ENCODE measurements at regions of chr6 and their contacts with region 1.

Region 1: DNA sequence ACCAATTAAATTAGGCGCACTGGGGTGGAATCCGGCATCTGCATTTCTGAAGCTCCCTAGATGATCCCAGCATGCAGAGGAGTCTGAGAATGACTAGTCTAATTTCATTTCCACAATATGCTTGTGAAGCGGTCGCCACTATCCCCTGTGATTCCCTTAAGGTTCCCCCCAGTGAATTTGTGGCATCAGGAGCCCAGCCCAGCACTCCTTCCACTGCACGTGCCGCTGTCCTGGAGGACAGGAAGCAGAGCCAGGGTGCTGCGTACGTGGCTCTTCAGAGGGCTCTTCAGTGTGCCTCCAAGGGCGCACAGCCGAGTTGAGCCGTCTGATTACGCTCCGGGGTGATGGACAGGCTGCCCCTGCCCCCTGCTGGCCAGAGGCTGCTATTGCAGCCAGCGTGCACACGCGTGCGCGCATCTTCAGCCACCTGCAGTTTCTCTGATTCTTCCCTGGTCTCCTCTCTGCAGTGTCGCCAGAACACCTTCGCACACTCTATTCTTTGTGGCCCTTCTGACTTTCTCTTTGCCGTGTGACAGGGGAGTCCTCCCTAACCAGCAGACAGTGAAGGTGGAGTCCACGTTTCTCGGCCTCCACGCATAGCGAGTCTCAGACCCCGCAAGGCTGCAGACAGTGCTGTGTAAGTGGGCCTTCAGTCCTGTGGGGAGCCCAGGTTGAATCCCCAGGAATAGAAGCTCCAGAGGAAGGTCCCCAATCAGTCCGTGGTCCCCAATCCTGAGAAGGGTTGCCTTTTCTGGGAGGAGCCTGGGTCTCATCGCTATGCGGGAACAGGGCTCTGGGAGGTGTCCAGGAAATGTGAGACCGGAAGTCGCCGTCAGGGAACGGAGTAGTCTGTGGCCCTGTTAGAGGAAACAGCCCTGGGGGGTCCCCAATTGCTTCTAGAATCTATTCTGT is 16.5 kb upstream of the NCR2 start:
- DNase-seq: peak; percentile 78 to 92
- ATAC-seq: peak; percentile 99 to 100 (median 100)
- H3K4me3 ChIP-seq: no peak overlapping the region
- H3K4me3 Mint-ChIP-seq: no peak overlapping the region
- H3K27ac ChIP-seq: no peak overlapping the region
- H3K27ac Mint-ChIP-seq: no peak overlapping the region
- H3K4me1 ChIP-seq: peaks cover 12% of the 10 kb centered on the region
- H3K4me1 Mint-ChIP-seq: peaks cover 8 to 12% of the 10 kb centered on the region in 2 donors
- H3K27me3 ChIP-seq: no peaks in the 10 kb centered on the region
- H3K27me3 Mint-ChIP-seq: peaks cover 23 to 35% of the 10 kb centered on the region in 2 donors
- CTCF ChIP-seq: peak; percentile 99

Region 2: DNA sequence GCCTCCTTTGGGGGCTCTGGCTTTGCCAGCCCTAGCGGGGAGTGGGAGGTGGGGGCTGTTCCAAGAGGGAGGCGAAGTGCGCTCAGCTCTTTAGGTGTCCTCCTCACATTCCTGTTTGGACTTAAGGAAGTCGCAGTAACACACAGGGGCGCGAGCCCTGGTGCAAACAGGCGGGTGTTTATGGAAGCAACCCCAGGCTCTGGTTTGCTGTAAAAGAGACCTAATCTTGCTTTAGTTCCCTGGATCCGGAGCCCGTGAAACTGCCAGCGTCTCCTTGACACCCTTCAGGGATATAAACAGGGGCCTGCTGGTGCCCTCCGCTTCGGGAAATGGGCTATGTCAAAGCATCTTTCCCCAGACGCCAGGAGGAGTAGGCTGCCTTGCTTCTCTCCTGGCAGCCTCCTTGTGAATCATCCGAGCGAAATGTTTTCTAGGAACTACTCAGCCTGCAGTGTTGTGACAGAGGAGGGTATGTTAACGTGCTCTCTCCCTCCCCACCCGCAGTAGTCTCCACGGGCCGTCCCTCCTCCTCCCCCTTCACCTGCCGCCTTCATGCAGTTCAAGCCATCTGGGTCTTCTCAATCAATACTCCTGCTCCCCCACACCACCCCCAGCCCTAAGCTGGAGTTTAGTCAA is 563.7 kb before region 1 on chr6:
- intact Hi-C with region 1: no loop called
- DNase-seq: no peak
- ATAC-seq: no peak
- H3K4me3 ChIP-seq: no peak overlapping the region
- H3K4me3 Mint-ChIP-seq: no peak overlapping the region
- H3K27ac ChIP-seq: no peak overlapping the region
- H3K27ac Mint-ChIP-seq: no peak overlapping the region
- H3K4me1 ChIP-seq: no peaks in the 10 kb centered on the region
- H3K4me1 Mint-ChIP-seq: no peaks in the 10 kb centered on the region
- H3K27me3 ChIP-seq: peaks cover 9% of the 10 kb centered on the region
- H3K27me3 Mint-ChIP-seq: peaks cover 41 to 57% of the 10 kb centered on the region in 2 donors
- CTCF ChIP-seq: no peak

Region 3: GRCh38 chr6:41002216-41002615 is 316.7 kb before region 1 on chr6:
- intact Hi-C with region 1: loop called (anchors 1 kb)
- DNase-seq: no peak
- ATAC-seq: no peak
- H3K4me3 ChIP-seq: no peak overlapping the region
- H3K4me3 Mint-ChIP-seq: no peak overlapping the region
- H3K27ac ChIP-seq: no peak overlapping the region
- H3K27ac Mint-ChIP-seq: no peak overlapping the region
- H3K4me1 ChIP-seq: no peaks in the 10 kb centered on the region
- H3K4me1 Mint-ChIP-seq: no peaks in the 10 kb centered on the region
- H3K27me3 ChIP-seq: no peaks in the 10 kb centered on the region
- H3K27me3 Mint-ChIP-seq: peaks cover 24 to 77% of the 10 kb centered on the region in 2 donors
- CTCF ChIP-seq: no peak

Region 4: GRCh38 chr6:41092421-41093140 is 226.3 kb before region 1 on chr6:
- intact Hi-C with region 1: loop called (anchors 1 kb)
- DNase-seq: peak in 1 of 2 donors; percentile 29
- ATAC-seq: peak in 1 of 3 donors; percentile 45
- H3K4me3 ChIP-seq: no peak overlapping the region
- H3K4me3 Mint-ChIP-seq: no peak overlapping the region
- H3K27ac ChIP-seq: no peak overlapping the region
- H3K27ac Mint-ChIP-seq: no peak overlapping the region
- H3K4me1 ChIP-seq: no peaks in the 10 kb centered on the region
- H3K4me1 Mint-ChIP-seq: no peaks in the 10 kb centered on the region
- H3K27me3 ChIP-seq: no peaks in the 10 kb centered on the region
- H3K27me3 Mint-ChIP-seq: no peaks in the 10 kb centered on the region
- CTCF ChIP-seq: peak; percentile 27

Region 5: GRCh38 chr6:41191569-41191968 is 127.3 kb before region 1 on chr6:
- intact Hi-C with region 1: loop called (anchors 1 kb)
- DNase-seq: peak; percentile 40 to 60
- ATAC-seq: peak; percentile 65 to 84 (median 79)
- H3K4me3 ChIP-seq: no peak overlapping the region
- H3K4me3 Mint-ChIP-seq: no peak overlapping the region
- H3K27ac ChIP-seq: no peak overlapping the region
- H3K27ac Mint-ChIP-seq: no peak overlapping the region
- H3K4me1 ChIP-seq: peaks cover 17% of the 10 kb centered on the region
- H3K4me1 Mint-ChIP-seq: peaks cover 24 to 36% of the 10 kb centered on the region in 2 donors
- H3K27me3 ChIP-seq: no peaks in the 10 kb centered on the region
- H3K27me3 Mint-ChIP-seq: no peaks in the 10 kb centered on the region
- CTCF ChIP-seq: peak; percentile 40

Region 6: DNA sequence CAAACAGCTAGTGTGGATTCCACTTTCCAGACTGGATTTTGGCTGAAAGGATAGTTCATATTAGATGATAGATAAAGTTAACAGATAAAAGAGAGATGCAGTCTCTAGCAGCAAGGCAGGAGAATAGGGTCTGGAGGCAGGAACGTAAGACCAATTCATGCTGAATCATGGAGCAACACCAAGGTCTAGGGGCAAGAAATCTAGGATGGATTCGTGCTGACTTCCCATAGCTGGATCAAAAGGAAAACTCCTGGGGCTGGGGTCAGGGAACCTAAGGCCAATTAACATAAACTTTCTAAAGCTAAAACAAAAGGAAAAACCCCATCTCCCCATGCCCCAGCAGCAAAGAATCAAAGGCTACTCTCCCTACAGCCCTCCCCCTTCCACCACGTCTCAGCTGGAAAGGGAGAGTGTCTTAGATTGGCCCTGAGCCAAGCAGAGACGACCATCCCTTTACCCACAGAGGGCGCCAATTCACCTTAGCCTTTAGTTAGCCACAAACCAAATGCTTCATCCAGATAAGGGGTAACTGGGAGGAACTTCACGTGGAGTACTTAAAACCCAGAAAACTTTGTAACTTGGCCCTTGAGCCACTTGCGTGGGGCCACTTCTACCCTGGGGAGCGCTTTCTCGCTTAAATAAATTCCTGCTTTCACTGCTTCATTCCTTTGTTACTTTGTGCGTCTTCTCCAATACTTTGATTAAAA is 40.1 kb before region 1 on chr6:
- intact Hi-C with region 1: loop called (anchors 2 kb)
- DNase-seq: peak; percentile 33 to 85
- ATAC-seq: peak; percentile 74 to 91 (median 76)
- H3K4me3 ChIP-seq: no peak overlapping the region
- H3K4me3 Mint-ChIP-seq: no peak overlapping the region
- H3K27ac ChIP-seq: no peak overlapping the region
- H3K27ac Mint-ChIP-seq: peak overlapping the region in 1 of 2 donors; percentile 58
- H3K4me1 ChIP-seq: peaks cover 13% of the 10 kb centered on the region
- H3K4me1 Mint-ChIP-seq: peaks cover 6 to 11% of the 10 kb centered on the region in 2 donors
- H3K27me3 ChIP-seq: no peaks in the 10 kb centered on the region
- H3K27me3 Mint-ChIP-seq: peaks cover 0 to 4% of the 10 kb centered on the region in 2 donors
- CTCF ChIP-seq: peak; percentile 37

Region 7: DNA sequence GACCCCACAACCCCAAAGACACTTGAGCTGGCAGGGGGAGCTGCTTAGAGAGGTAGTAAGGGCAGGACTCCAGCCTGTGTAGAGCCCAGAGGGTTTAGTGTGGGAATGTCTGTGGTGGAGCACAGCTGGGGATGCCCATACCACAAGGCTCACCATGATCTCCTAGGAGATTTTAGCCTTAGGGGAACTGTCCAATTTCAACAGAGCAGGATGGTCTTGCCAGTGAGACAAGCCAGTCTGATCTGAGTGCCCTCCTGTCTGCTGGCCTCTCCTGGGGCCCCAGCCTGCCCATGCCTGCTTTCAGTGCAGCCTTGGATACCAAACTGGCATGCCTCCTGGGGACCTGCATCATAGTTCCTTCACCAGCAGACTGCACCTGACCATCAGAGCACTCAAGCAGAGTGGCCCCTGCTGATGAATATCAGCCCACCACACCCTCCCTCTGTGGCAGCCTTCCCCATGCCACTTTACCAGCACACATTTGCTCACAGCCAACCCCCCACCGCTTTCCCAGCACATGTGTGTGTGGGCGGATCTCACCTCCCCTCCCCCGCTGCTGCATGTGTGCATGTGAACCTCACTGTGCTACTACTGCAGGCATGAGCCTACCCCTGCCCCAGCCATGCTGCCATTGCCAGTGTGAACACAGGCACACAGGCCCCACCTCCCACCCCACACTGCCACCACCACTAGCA is 24.6 kb before region 1 on chr6:
- intact Hi-C with region 1: no loop called
- DNase-seq: no peak
- ATAC-seq: no peak
- H3K4me3 ChIP-seq: no peak overlapping the region
- H3K4me3 Mint-ChIP-seq: no peak overlapping the region
- H3K27ac ChIP-seq: no peak overlapping the region
- H3K27ac Mint-ChIP-seq: no peak overlapping the region
- H3K4me1 ChIP-seq: no peaks in the 10 kb centered on the region
- H3K4me1 Mint-ChIP-seq: peaks cover 15 to 20% of the 10 kb centered on the region in 2 donors
- H3K27me3 ChIP-seq: no peaks in the 10 kb centered on the region
- H3K27me3 Mint-ChIP-seq: no peaks in the 10 kb centered on the region
- CTCF ChIP-seq: no peak

Region 8: GRCh38 chr6:41442800-41443501 is 124.0 kb after region 1 on chr6:
- intact Hi-C with region 1: no loop called
- DNase-seq: peak in 1 of 2 donors; percentile 55
- ATAC-seq: peak in 1 of 3 donors; percentile 23
- H3K4me3 ChIP-seq: no peak overlapping the region
- H3K4me3 Mint-ChIP-seq: peak overlapping the region; percentile 13
- H3K27ac ChIP-seq: peak overlapping the region; percentile 51
- H3K27ac Mint-ChIP-seq: no peak overlapping the region
- H3K4me1 ChIP-seq: peaks cover 53% of the 10 kb centered on the region
- H3K4me1 Mint-ChIP-seq: peaks cover 33 to 39% of the 10 kb centered on the region in 2 donors
- H3K27me3 ChIP-seq: peaks cover 34% of the 10 kb centered on the region
- H3K27me3 Mint-ChIP-seq: peaks cover 72 to 78% of the 10 kb centered on the region in 2 donors
- CTCF ChIP-seq: peak; percentile 39

Region 9: DNA sequence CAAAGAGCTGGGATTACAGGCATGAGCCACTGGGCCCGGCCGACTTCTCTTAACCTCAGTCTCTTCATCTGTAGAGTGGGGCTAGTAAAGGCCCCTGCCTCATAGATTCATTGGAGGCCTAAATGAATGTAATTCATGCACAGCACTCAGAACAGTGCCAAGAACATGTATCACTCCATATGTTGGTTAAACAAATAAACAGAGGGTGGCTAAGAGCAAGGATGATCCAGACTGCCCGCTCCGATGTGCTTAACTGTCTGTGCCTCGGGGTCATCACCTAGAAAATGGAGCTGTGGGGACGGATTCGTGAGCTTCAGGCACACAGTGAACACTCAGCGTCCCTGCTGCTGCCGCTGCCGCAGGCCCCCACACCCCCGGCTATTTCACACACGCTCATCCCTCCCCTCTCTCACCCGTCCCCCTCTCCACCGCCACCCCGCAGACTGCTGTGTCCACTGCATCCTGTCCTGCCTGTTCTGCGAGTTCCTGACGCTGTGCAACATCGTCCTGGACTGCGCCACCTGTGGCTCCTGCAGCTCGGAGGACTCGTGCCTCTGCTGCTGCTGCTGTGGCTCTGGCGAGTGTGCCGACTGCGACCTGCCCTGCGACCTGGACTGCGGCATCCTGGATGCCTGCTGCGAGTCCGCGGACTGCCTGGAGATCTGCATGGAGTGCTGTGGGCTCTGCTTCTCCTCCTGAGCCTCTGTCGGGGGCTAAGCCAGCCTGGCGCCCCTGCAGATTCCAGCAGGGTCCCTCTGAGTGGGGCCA is 334.2 kb after region 1 on chr6:
- intact Hi-C with region 1: no loop called
- DNase-seq: no peak
- ATAC-seq: no peak
- H3K4me3 ChIP-seq: no peak overlapping the region
- H3K4me3 Mint-ChIP-seq: no peak overlapping the region
- H3K27ac ChIP-seq: no peak overlapping the region
- H3K27ac Mint-ChIP-seq: no peak overlapping the region
- H3K4me1 ChIP-seq: no peaks in the 10 kb centered on the region
- H3K4me1 Mint-ChIP-seq: no peaks in the 10 kb centered on the region
- H3K27me3 ChIP-seq: no peaks in the 10 kb centered on the region
- H3K27me3 Mint-ChIP-seq: peaks cover 6 to 20% of the 10 kb centered on the region in 2 donors
- CTCF ChIP-seq: no peak